H1 (cell line): ENCODE measurements at regions of chr7 and their contacts with region 1.

Region 1: DNA sequence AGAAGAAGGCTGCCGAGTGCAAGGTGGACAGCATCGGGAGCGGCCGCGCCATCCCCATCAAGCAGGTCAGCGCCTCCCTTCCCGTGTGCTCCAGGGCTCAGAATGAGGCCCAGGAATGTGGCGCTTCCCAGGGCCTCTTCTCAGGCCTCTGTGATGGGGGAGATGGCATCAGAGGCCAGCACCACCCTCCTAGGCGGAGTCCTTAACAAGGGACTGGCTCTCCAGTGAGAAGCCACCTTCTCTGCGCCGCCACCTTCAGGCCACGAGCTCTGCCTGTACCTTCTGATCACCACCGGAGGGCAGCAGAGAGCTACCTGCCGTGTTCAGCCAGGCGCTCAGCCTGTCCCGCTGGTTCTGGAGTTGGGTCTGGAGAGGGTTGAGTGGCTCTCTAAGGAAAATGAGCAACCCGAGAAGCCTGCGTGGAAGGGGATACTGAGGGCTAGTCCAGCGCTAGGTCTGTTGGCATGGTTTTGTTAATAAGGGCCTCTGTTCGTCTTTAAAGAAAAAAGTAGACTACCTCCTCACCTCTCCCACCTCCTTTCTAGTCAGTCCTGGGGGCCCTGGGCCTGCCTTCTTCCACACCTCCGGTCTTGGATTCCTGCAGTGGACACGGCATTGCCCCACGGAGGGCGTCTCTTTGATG is 37.7 kb downstream of the AGAP3 start:
- DNase-seq: peak in 1 of 2 experiments; percentile 94
- H3K4me3 ChIP-seq: no peak overlapping the region
- H3K27ac ChIP-seq: no peak overlapping the region
- H3K4me1 ChIP-seq: peaks cover 0 to 23% (median 7%) of the 10 kb centered on the region in 4 experiments; a peak in 6 of 7 replicates
- H3K27me3 ChIP-seq: peaks cover 0 to 13% (median 4%) of the 10 kb centered on the region in 4 experiments; a peak in 5 of 7 replicates
- CTCF ChIP-seq: peak in 2 of 3 experiments; percentile 99 to 100; a peak in 3 of 4 replicates
- EP300 ChIP-seq: no peak
- POLR2A ChIP-seq: no peak
- RAD21 ChIP-seq: peak; percentile 96 to 98

Region 2: GRCh38 chr7:151143261-151144015 is 19.5 kb after region 1 on chr7:
- CTCF ChIA-PET with region 1: interaction called, 197 read pairs
- POLR2A ChIA-PET with region 1: interaction called, 7 read pairs
- DNase-seq: no peak
- H3K4me3 ChIP-seq: no peak overlapping the region
- H3K27ac ChIP-seq: no peak overlapping the region
- H3K4me1 ChIP-seq: peaks cover 3 to 25% (median 12%) of the 10 kb centered on the region in 4 experiments
- H3K27me3 ChIP-seq: 0 out of 7 replicates have a peak, but pooled peaks cover 0 to 1% (median 0%) of the 10 kb centered on the region in 4 experiments
- CTCF ChIP-seq: no peak
- EP300 ChIP-seq: no peak
- POLR2A ChIP-seq: no peak
- RAD21 ChIP-seq: no peak

Region 3: GRCh38 chr7:151152643-151153513 is 28.9 kb after region 1 on chr7:
- CTCF ChIA-PET with region 1: interaction called, 197 read pairs
- POLR2A ChIA-PET with region 1: interaction called, 5 read pairs
- DNase-seq: no peak
- H3K4me3 ChIP-seq: no peak overlapping the region
- H3K27ac ChIP-seq: no peak overlapping the region
- H3K4me1 ChIP-seq: no peaks in the 10 kb centered on the region
- H3K27me3 ChIP-seq: peaks cover 0 to 6% (median 2%) of the 10 kb centered on the region in 4 experiments; a peak in 3 of 7 replicates
- CTCF ChIP-seq: peak in 2 of 3 experiments; percentile 4 to 24; a peak in 2 of 4 replicates
- EP300 ChIP-seq: no peak
- POLR2A ChIP-seq: no peak
- RAD21 ChIP-seq: no peak

Region 4: GRCh38 chr7:151181011-151181431 is 57.1 kb after region 1 on chr7:
- CTCF ChIA-PET with region 1: interaction called, 52 read pairs
- POLR2A ChIA-PET with region 1: interaction called, 6 read pairs
- DNase-seq: no peak
- H3K4me3 ChIP-seq: no peak overlapping the region
- H3K27ac ChIP-seq: no peak overlapping the region
- H3K4me1 ChIP-seq: no peaks in the 10 kb centered on the region
- H3K27me3 ChIP-seq: peaks cover 0 to 3% (median 0%) of the 10 kb centered on the region in 4 experiments; a peak in 1 of 7 replicates
- CTCF ChIP-seq: no peak
- EP300 ChIP-seq: no peak
- POLR2A ChIP-seq: no peak
- RAD21 ChIP-seq: no peak

Region 5: GRCh38 chr7:151322906-151323305 is 199.0 kb after region 1 on chr7:
- CTCF ChIA-PET with region 1: no interaction called
- POLR2A ChIA-PET with region 1: no interaction called
- DNase-seq: no peak
- H3K4me3 ChIP-seq: no peak overlapping the region
- H3K27ac ChIP-seq: no peak overlapping the region
- H3K4me1 ChIP-seq: no peaks in the 10 kb centered on the region
- H3K27me3 ChIP-seq: no peaks in the 10 kb centered on the region
- CTCF ChIP-seq: no peak
- EP300 ChIP-seq: no peak
- POLR2A ChIP-seq: no peak
- RAD21 ChIP-seq: no peak